ENCODE measurements at regions of chr4 and their contacts with region 1.

Region 1: GRCh38 chr4:177339477-177340374 is 30.1 kb downstream of the NEIL3 start:
- DNase-seq: peak; percentile 55
- H3K4me3 Mint-ChIP-seq: no peak overlapping the region
- H3K27ac Mint-ChIP-seq: peak overlapping the region; percentile 46
- H3K4me1 Mint-ChIP-seq: peaks cover 11% of the 10 kb centered on the region
- H3K27me3 Mint-ChIP-seq: no peaks in the 10 kb centered on the region
- CTCF ChIP-seq: peak; percentile 73

Region 2: DNA sequence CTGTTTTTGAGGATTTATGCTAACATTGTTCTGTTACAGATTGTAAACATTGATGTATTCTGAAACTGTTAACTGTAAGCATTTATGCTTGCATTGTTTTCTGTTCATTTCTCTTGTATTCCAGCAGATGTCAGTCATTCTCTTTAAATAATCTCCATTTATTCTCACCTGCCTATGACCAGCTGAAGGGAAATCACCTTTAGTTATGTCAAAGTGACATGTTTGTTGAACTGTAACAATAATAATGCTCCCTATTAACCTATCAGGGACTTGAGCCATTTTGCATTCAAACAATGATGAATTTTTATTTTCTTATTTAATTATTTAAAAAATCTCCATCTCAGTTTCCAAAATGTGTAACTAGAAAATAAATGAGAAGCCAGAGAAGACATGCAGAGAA is 961.9 kb before region 1 on chr4:
- CTCF ChIA-PET with region 1: interaction called, 7 read pairs
- POLR2A ChIA-PET with region 1: no interaction called
- intact Hi-C with region 1: loop called (anchors 1 kb)
- DNase-seq: peak; percentile 40
- H3K4me3 Mint-ChIP-seq: no peak overlapping the region
- H3K27ac Mint-ChIP-seq: no peak overlapping the region
- H3K4me1 Mint-ChIP-seq: peaks cover 8% of the 10 kb centered on the region
- H3K27me3 Mint-ChIP-seq: no peaks in the 10 kb centered on the region
- CTCF ChIP-seq: peak; percentile 72

Region 3: GRCh38 chr4:176563591-176563990 is 776.1 kb before region 1 on chr4:
- CTCF ChIA-PET with region 1: no interaction called
- POLR2A ChIA-PET with region 1: no interaction called
- intact Hi-C with region 1: loop called (anchors 5 kb)
- DNase-seq: peak; percentile 35
- H3K4me3 Mint-ChIP-seq: no peak overlapping the region
- H3K27ac Mint-ChIP-seq: no peak overlapping the region
- H3K4me1 Mint-ChIP-seq: peaks cover 5% of the 10 kb centered on the region
- H3K27me3 Mint-ChIP-seq: no peaks in the 10 kb centered on the region
- CTCF ChIP-seq: peak; percentile 10

Region 4: DNA sequence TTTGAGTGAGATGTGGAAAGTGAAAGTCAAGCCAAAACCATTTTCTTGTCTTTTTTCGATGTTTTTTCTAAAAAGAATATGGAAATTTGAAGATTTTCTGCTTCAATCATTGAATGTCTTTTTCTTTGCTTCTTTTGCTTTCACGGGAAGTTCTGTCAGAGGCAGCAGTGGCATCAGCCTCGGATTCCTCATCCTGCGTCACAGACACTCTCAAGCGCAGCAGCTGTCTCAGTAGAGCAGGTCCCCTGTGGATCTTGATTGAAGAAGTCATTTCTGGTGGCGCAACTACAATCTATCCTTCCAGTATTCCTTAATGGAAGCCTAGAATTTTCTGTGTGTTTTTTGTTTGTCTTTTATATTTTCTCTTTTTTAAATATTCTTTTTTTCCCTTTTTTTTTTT is 82.8 kb before region 1 on chr4:
- CTCF ChIA-PET with region 1: interaction called, 220 read pairs
- POLR2A ChIA-PET with region 1: interaction called, 3 read pairs
- intact Hi-C with region 1: no loop called
- DNase-seq: no peak
- H3K4me3 Mint-ChIP-seq: no peak overlapping the region
- H3K27ac Mint-ChIP-seq: no peak overlapping the region
- H3K4me1 Mint-ChIP-seq: no peaks in the 10 kb centered on the region
- H3K27me3 Mint-ChIP-seq: no peaks in the 10 kb centered on the region
- CTCF ChIP-seq: no peak

Measured in MCF 10A (cell line).